MCF 10A (cell line): ENCODE measurements at regions of chr2 and their contacts with region 1.

Region 1: GRCh38 chr2:57516698-57517340 is 529.8 kb upstream of the VRK2 start:
- DNase-seq: peak; percentile 38
- H3K4me3 Mint-ChIP-seq: no peak overlapping the region
- H3K27ac Mint-ChIP-seq: no peak overlapping the region
- H3K4me1 Mint-ChIP-seq: no peaks in the 10 kb centered on the region
- H3K27me3 Mint-ChIP-seq: no peaks in the 10 kb centered on the region
- CTCF ChIP-seq: peak; percentile 42

Region 2: DNA sequence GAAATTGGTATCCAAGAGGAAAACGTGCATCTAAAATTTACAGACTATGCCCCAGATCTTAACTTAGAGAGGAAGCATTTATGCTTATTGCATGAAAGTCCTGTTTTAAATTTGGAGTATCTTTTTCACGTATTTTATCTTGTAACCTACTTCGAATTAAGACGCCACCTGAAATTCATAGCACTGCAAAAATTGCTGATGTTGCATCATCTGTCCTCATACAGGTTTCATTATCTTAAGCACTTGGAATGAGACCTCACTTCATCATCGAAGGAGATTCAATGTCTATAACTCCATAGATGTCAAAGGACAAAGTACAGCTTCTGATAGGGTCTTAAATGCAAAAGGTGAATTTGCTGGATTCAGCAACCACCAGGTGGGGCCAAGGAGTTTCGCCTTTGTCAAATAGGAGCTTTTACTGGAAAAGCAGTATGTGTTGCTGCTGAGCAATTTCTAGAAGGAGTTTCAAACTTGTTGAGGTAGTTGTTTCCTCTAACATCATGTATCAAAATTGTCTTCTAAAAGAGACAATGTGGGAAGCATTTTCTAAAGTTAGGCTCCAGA is 1439.4 kb before region 1 on chr2:
- CTCF ChIA-PET with region 1: no interaction called
- POLR2A ChIA-PET with region 1: no interaction called
- intact Hi-C with region 1: loop called (anchors 10 kb)
- DNase-seq: peak; percentile 54
- H3K4me3 Mint-ChIP-seq: no peak overlapping the region
- H3K27ac Mint-ChIP-seq: no peak overlapping the region
- H3K4me1 Mint-ChIP-seq: no peaks in the 10 kb centered on the region
- H3K27me3 Mint-ChIP-seq: peaks cover 15% of the 10 kb centered on the region
- CTCF ChIP-seq: peak; percentile 57

Region 3: DNA sequence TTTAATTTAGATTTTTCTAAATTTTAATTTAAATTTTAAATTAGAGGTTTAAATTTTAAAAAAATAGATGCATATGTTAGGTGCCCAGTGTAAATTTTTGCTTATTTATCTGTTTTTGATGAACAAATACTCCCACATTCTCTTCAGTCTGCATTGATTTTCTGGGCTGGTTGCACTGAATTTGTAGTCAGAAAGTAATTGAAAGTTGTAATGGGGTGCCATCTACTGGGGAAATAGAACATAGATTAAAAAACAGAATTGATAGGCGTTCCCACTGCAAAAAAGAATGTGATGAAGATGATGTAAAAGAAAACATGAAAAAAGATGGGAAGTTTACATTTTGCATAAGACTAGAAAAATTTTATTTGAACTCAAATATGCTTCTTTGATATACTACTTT is 1384.7 kb before region 1 on chr2:
- CTCF ChIA-PET with region 1: interaction called, 7 read pairs
- POLR2A ChIA-PET with region 1: no interaction called
- intact Hi-C with region 1: loop called (anchors 1 kb)
- DNase-seq: peak; percentile 66
- H3K4me3 Mint-ChIP-seq: no peak overlapping the region
- H3K27ac Mint-ChIP-seq: no peak overlapping the region
- H3K4me1 Mint-ChIP-seq: no peaks in the 10 kb centered on the region
- H3K27me3 Mint-ChIP-seq: no peaks in the 10 kb centered on the region
- CTCF ChIP-seq: peak; percentile 29

Region 4: DNA sequence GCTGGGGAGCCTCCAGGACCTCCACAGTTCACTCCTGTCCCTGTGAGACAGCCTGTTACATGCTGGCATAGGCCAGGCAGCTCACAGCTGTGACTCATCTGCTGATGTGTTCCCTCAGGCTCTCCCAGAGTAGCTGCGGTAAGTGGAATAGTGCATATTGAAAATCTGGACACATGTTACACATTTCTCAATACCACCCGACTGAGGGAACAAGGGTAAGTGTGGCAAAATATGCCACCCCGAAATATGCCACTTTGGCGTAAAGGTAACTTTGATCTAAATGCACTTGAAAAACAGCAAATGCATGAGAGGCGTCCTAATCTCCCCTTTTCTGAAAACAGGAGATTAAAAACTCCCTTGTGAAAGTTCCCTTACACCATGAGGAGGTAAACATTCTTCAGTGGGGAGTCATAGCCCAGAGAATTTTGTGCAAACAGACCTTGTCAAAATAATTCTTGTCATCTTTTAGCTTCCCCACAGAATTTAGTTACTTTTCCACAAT is 775.2 kb before region 1 on chr2:
- CTCF ChIA-PET with region 1: interaction called, 3 read pairs
- POLR2A ChIA-PET with region 1: no interaction called
- intact Hi-C with region 1: loop called (anchors 5 kb)
- DNase-seq: peak; percentile 95
- H3K4me3 Mint-ChIP-seq: peak overlapping the region; percentile 63
- H3K27ac Mint-ChIP-seq: peak overlapping the region; percentile 96
- H3K4me1 Mint-ChIP-seq: peaks cover 28% of the 10 kb centered on the region
- H3K27me3 Mint-ChIP-seq: no peaks in the 10 kb centered on the region
- CTCF ChIP-seq: no peak